PC-9 (cell line): ENCODE measurements at regions of chr14 and their contacts with region 1.

Region 1: GRCh38 chr14:48665077-48665784 is 920.9 kb downstream of the RPS29 start:
- DNase-seq: no peak
- H3K4me3 ChIP-seq: no peak overlapping the region
- H3K27ac ChIP-seq: no peak overlapping the region
- H3K4me1 ChIP-seq: no peaks in the 10 kb centered on the region
- H3K27me3 ChIP-seq: no peaks in the 10 kb centered on the region
- CTCF ChIP-seq: no peak

Region 2: DNA sequence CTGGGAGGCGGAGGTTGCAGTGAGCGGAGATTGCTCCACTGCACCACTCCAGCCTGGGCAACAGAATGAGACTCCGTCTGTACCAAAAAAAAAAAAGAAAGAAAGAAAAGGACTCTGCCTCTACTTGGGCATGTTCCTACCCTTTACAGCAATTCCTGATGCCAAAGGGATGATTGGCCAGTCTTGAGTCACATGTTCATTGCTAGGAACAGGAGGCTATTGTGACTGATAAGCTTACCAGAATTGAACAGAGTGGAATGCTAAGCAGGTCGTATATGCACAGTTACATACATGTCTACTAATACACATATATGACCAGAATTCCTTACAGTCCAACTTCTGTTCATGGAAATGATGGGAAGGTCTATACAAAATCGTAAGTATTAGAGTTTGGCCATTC is 1061.9 kb after region 1 on chr14:
- CTCF ChIA-PET with region 1: no interaction called
- POLR2A ChIA-PET with region 1: interaction called, 13 read pairs
- intact Hi-C with region 1: no loop called
- DNase-seq: no peak
- H3K4me3 ChIP-seq: no peak overlapping the region
- H3K27ac ChIP-seq: no peak overlapping the region
- H3K4me1 ChIP-seq: no peaks in the 10 kb centered on the region
- H3K27me3 ChIP-seq: no peaks in the 10 kb centered on the region
- CTCF ChIP-seq: no peak

Region 3: GRCh38 chr14:49908432-49908781 is 1243.2 kb after region 1 on chr14:
- CTCF ChIA-PET with region 1: no interaction called
- POLR2A ChIA-PET with region 1: interaction called, 13 read pairs
- intact Hi-C with region 1: no loop called
- DNase-seq: peak in 1 of 2 experiments; percentile 85
- H3K4me3 ChIP-seq: no peak overlapping the region
- H3K27ac ChIP-seq: peak overlapping the region; percentile 86
- H3K4me1 ChIP-seq: peaks cover 50% of the 10 kb centered on the region
- H3K27me3 ChIP-seq: no peaks in the 10 kb centered on the region
- CTCF ChIP-seq: no peak